GM23248 (cell line): ENCODE measurements at regions of chr13 and their contacts with region 1.

Region 1: GRCh38 chr13:52128714-52129700 is at the start of gene NEK5:
- DNase-seq: peak; percentile 81
- H3K4me3 ChIP-seq: peak within 1 kb of the TSS; percentile 77
- H3K27ac ChIP-seq: no peak within 1 kb of the TSS
- H3K4me1 ChIP-seq: no peaks in the 10 kb centered on the region; the same call in 1 of the 2 replicates
- H3K27me3 ChIP-seq: no peaks in the 10 kb centered on the region
- total RNA-seq, gene NEK5: not detected in 2 replicates

Region 2: GRCh38 chr13:51435002-51435578 is 693.9 kb before region 1 on chr13:
- in situ Hi-C with region 1: loop called (anchors 25 kb)
- DNase-seq: peak; percentile 72
- H3K4me3 ChIP-seq: no peak overlapping the region
- H3K27ac ChIP-seq: no peak overlapping the region
- H3K4me1 ChIP-seq: no peaks in the 10 kb centered on the region
- H3K27me3 ChIP-seq: no peaks in the 10 kb centered on the region

Region 3: DNA sequence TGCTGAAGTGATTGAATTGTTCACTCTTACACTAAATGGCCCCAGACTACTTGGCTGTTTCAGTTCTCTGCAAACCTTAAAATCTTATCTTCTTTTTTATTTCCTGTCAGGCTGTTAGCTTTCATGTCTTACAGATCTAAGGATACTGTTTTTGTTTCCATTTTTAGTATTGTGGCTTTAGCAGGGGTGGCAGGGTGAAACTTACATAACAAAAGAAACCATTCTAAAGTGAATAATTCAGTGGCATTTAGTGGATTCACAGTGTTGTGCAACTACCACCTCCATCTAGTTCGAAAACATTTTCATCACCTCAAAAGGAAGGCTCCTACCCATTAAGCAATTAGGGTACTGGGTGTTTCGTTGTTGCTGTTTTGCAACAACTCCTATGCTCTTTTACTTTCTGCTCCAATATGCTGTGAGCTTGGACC is 303.8 kb before region 1 on chr13:
- in situ Hi-C with region 1: loop called (anchors 10 kb)
- DNase-seq: peak; percentile 48
- H3K4me3 ChIP-seq: no peak overlapping the region
- H3K27ac ChIP-seq: no peak overlapping the region
- H3K4me1 ChIP-seq: peaks cover 10% of the 10 kb centered on the region
- H3K27me3 ChIP-seq: peaks cover 35% of the 10 kb centered on the region

Region 4: DNA sequence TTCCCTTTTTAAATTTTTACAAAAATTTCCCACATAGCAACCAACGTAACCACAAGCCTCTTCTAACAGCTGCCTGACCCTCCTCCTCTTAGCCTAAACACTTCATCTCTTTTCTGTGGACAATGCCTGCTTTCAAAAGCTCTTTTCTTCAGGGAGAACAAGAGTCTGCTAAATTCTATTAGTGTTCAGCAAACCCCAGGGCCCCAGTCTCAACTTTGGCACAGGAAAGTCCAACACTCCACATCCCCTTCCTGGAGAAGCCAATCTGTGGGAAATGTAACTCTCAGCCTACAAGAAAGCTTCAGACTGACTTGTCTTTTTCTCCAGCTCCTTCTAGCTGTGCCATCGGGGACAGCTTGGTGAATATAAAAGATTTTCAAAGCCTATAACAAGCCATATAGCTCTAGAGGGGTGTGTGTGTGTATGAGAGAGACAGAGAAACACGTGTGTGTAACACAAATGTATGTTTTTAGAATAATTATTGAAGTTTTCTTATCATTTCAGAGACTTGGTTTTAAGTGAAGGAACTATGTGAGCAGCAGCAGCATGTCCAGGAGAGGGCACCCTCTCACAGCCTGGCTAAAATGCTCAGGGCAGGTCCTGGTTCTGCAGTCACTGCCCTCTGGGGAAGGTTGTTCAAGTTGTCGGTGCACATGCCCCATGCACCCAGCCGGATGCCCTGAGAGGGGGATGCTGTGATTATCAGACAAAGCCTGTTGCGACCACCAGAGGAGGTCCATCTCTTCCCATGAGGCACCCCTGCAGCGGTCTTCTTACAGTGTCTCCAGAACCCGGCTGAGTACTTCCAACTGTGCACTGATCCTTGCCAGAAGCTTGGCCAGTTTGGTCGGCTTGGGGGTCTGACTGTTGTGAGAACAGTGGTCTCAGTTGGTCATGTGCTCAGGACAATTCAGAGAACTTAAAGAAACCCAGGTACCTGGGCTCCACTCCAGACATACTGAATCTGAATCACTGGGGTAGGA is 232.8 kb before region 1 on chr13:
- in situ Hi-C with region 1: loop called (anchors 10 kb)
- DNase-seq: peak; percentile 76
- H3K4me3 ChIP-seq: no peak overlapping the region
- H3K27ac ChIP-seq: no peak overlapping the region
- H3K4me1 ChIP-seq: no peaks in the 10 kb centered on the region
- H3K27me3 ChIP-seq: peaks cover 30% of the 10 kb centered on the region

Region 5: DNA sequence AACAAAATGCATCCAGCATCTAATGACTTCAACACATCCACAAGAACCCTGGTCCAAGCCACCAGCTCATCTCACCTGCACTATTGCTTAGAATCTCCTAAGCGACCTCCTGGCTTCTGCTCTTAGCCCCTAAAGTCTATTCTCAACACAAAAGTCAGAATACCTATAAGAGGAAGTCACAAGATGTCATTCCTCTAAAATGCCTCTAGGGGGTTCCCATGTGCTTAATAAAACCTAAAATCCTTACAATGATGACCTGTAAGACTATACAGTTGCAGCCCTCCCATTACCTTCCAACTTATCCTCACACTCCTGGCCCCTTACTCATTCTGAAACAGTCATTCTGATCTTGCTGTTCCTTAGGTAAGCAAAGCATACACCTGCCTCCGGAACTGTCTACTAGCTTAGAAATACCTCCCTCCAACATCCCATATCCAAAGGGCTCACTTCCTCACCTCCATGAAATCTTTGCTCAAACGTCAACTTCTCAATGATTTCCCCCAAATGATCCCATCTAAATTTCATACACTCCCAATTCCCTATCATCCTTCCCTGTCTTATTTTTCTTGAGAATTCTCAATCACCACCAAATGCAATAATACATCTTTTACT is 127.8 kb before region 1 on chr13:
- in situ Hi-C with region 1: loop called (anchors 10 kb)
- DNase-seq: peak; percentile 69
- H3K4me3 ChIP-seq: no peak overlapping the region
- H3K27ac ChIP-seq: no peak overlapping the region
- H3K4me1 ChIP-seq: no peaks in the 10 kb centered on the region
- H3K27me3 ChIP-seq: peaks cover 44% of the 10 kb centered on the region

Region 6: GRCh38 chr13:52319876-52320275 is 190.9 kb after region 1 on chr13:
- in situ Hi-C with region 1: no loop called
- DNase-seq: peak; percentile 9
- H3K4me3 ChIP-seq: no peak overlapping the region
- H3K27ac ChIP-seq: no peak overlapping the region
- H3K4me1 ChIP-seq: no peaks in the 10 kb centered on the region
- H3K27me3 ChIP-seq: no peaks in the 10 kb centered on the region